GM23248 (cell line): ENCODE measurements at regions of chr2 and their contacts with region 1.

Region 1: GRCh38 chr2:171598713-171599319 is 76.5 kb downstream of the CYBRD1 start:
- DNase-seq: peak; percentile 86
- H3K4me3 ChIP-seq: no peak overlapping the region
- H3K27ac ChIP-seq: no peak overlapping the region
- H3K4me1 ChIP-seq: peaks cover 11% of the 10 kb centered on the region
- H3K27me3 ChIP-seq: no peaks in the 10 kb centered on the region

Region 2: GRCh38 chr2:171069286-171069956 is 529.4 kb before region 1 on chr2:
- in situ Hi-C with region 1: no loop called
- DNase-seq: no peak
- H3K4me3 ChIP-seq: no peak overlapping the region
- H3K27ac ChIP-seq: no peak overlapping the region
- H3K4me1 ChIP-seq: peaks cover 6% of the 10 kb centered on the region
- H3K27me3 ChIP-seq: no peaks in the 10 kb centered on the region

Region 3: GRCh38 chr2:171342067-171342413 is 256.8 kb before region 1 on chr2:
- in situ Hi-C with region 1: no loop called
- DNase-seq: no peak
- H3K4me3 ChIP-seq: no peak overlapping the region
- H3K27ac ChIP-seq: no peak overlapping the region
- H3K4me1 ChIP-seq: peaks cover under 1% of the 10 kb centered on the region
- H3K27me3 ChIP-seq: no peaks in the 10 kb centered on the region

Region 4: GRCh38 chr2:171703574-171704347 is 104.9 kb after region 1 on chr2:
- in situ Hi-C with region 1: loop called (anchors 5 kb)
- DNase-seq: peak; percentile 71
- H3K4me3 ChIP-seq: no peak overlapping the region
- H3K27ac ChIP-seq: 0 out of 2 replicates have a peak overlapping the region, but pooled peaks have one; percentile 17
- H3K4me1 ChIP-seq: peaks cover 24% of the 10 kb centered on the region
- H3K27me3 ChIP-seq: no peaks in the 10 kb centered on the region

Region 5: DNA sequence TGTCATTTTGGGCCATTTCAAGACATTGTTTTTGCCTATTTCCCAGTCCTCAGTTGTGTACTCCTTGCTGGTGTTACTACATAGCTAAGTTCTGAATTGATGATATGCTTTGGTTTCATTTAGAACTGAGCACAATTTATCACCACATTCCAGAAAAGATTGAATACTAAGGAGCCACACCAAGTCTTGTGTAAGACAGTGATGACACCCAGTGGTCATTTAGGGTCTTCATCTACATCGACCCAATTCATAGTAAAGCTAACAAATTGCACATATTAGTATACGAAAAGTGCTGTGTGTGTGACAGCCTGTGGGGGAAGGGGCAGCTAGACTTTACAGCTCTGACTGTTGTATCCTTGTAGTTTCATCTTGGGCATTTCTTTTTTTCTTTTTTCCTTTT is 514.8 kb after region 1 on chr2:
- in situ Hi-C with region 1: loop called (anchors 10 kb)
- DNase-seq: peak; percentile 63
- H3K4me3 ChIP-seq: no peak overlapping the region
- H3K27ac ChIP-seq: no peak overlapping the region
- H3K4me1 ChIP-seq: peaks cover 3% of the 10 kb centered on the region
- H3K27me3 ChIP-seq: no peaks in the 10 kb centered on the region

Region 6: DNA sequence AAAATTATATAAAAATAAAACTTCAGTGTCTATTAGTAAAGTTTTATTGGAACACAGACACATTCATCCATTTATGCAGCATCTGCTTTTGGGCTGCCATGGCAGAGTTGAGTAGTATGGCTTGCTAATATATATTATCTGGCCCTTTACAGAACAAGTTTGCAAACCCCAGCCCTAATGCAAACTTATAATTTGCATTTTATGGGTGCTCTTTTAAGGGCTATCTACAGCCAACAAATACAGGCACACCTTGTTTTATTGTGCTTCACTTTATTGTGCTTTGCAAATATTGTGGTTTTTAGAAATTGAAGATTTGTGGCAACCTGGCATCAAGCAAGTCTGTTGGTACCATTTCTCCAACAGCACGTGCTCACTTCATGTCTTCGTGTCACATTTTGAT is 539.1 kb after region 1 on chr2:
- in situ Hi-C with region 1: no loop called
- DNase-seq: no peak
- H3K4me3 ChIP-seq: no peak overlapping the region
- H3K27ac ChIP-seq: no peak overlapping the region
- H3K4me1 ChIP-seq: no peaks in the 10 kb centered on the region
- H3K27me3 ChIP-seq: 0 out of 2 replicates have a peak, but pooled peaks cover 7% of the 10 kb centered on the region

Region 7: GRCh38 chr2:172465417-172466334 is 866.9 kb after region 1 on chr2:
- in situ Hi-C with region 1: loop called (anchors 25 kb)
- DNase-seq: peak; percentile 94
- H3K4me3 ChIP-seq: peak overlapping the region; percentile 63
- H3K27ac ChIP-seq: peak overlapping the region; percentile 13; the same call in 1 of the 2 replicates
- H3K4me1 ChIP-seq: peaks cover 13% of the 10 kb centered on the region
- H3K27me3 ChIP-seq: no peaks in the 10 kb centered on the region

Region 8: DNA sequence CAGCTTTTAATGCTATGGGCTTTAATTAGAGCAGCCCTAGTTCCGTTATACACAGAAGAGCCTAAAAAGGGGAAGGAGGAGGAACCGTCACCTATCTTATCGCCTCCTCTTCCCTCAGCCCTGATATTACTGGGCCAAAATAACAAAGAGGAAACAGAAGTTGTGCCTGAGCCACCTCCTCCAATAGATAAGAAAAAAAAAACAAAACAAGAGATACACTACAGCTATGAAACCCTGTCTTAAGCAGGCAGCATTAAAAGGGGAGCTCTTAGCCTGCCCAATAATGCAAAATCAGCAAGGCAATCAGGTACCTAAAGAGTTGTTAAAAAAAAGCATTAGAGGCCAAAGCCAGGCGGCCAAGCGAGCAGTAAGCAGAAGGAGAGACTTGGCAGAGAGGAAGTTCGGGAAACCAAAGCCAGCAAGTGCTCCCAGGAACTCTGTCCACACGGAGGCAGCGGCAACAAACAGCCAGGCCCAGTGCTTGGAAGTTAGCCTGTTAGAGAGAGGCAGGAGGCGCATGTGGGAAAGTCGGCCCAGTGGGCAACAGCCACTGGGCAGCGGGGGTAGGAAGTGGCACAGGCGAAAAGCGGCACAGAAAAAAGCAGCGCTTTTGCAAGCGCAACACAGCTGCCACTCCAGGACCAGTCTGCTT is 915.2 kb after region 1 on chr2:
- in situ Hi-C with region 1: no loop called
- DNase-seq: no peak
- H3K4me3 ChIP-seq: no peak overlapping the region
- H3K27ac ChIP-seq: no peak overlapping the region
- H3K4me1 ChIP-seq: peaks cover 10% of the 10 kb centered on the region; the same call in 1 of the 2 replicates
- H3K27me3 ChIP-seq: no peaks in the 10 kb centered on the region